OCI-LY7 (cell line): ENCODE measurements at regions of chr1 and their contacts with region 1.

Region 1: GRCh38 chr1:175319418-175320230 is 127.0 kb upstream of the KIAA0040 start:
- DNase-seq: peak; percentile 86
- H3K4me3 ChIP-seq: no peak overlapping the region
- H3K27ac ChIP-seq: no peak overlapping the region
- H3K4me1 ChIP-seq: peaks cover 37% of the 10 kb centered on the region
- CTCF ChIP-seq: peak; percentile 99

Region 2: GRCh38 chr1:175033953-175034352 is 285.7 kb before region 1 on chr1:
- CTCF ChIA-PET with region 1: no interaction called
- POLR2A ChIA-PET with region 1: no interaction called
- intact Hi-C with region 1: loop called (anchors 1 kb)
- DNase-seq: no peak
- H3K4me3 ChIP-seq: no peak overlapping the region
- H3K27ac ChIP-seq: no peak overlapping the region
- H3K4me1 ChIP-seq: peaks cover 7% of the 10 kb centered on the region
- CTCF ChIP-seq: no peak

Region 3: GRCh38 chr1:175208773-175209492 is 110.7 kb before region 1 on chr1:
- CTCF ChIA-PET with region 1: interaction called, 3 read pairs
- POLR2A ChIA-PET with region 1: no interaction called
- intact Hi-C with region 1: loop called (anchors 1 kb)
- DNase-seq: peak; percentile 91
- H3K4me3 ChIP-seq: peak overlapping the region; percentile 50
- H3K27ac ChIP-seq: peak overlapping the region; percentile 97
- H3K4me1 ChIP-seq: peaks cover 69% of the 10 kb centered on the region
- CTCF ChIP-seq: peak; percentile 49

Region 4: GRCh38 chr1:175225805-175226129 is 93.9 kb before region 1 on chr1:
- CTCF ChIA-PET with region 1: interaction called, 3 read pairs
- POLR2A ChIA-PET with region 1: interaction called, 3 read pairs
- intact Hi-C with region 1: loop called (anchors 1 kb)
- DNase-seq: no peak
- H3K4me3 ChIP-seq: peak overlapping the region; percentile 59
- H3K27ac ChIP-seq: peak overlapping the region; percentile 95
- H3K4me1 ChIP-seq: peaks cover 96% of the 10 kb centered on the region
- CTCF ChIP-seq: peak; percentile 79

Region 5: DNA sequence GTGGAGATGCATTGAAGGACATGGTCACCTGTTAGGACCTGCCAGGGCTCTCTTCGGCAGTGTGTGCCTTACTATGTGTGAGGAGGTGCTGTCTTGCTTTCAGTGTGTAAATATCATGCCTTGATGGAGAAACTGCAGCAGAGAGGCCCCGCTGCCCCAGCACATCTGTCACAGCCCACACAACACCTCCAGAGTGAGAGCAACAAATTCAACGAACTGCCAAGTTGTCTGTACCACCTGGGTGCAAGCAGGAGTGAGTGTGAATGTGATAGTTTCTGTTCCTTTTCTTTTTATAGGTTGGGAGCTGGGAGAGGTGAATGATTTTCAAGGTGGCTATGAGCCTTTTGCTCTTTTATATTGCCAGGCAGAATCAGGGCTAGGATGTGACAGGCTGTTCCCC is 12.5 kb before region 1 on chr1:
- CTCF ChIA-PET with region 1: no interaction called
- POLR2A ChIA-PET with region 1: interaction called, 17 read pairs
- intact Hi-C with region 1: no loop called
- DNase-seq: peak; percentile 89
- H3K4me3 ChIP-seq: peak overlapping the region; percentile 30
- H3K27ac ChIP-seq: peak overlapping the region; percentile 85
- H3K4me1 ChIP-seq: peaks cover 56% of the 10 kb centered on the region
- CTCF ChIP-seq: no peak

Region 6: DNA sequence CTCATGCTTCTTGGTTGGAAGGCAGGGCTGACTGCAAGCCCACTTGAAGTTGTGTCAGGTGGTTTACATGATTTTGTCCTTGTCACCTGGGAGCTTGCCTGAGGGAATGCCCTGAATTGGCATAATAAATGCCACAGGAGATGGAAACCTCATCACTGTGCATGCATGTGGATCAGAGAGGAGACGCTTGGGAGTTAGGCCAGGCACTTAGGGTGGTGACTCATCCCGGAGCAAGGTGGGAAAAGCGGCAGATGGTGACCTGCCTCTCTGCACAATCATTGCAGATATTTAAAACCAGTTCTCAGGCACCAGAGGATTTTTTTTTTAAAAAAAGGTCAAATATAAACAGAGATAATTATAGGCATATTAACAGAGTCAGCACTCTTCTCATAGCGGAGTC is 75.1 kb after region 1 on chr1:
- CTCF ChIA-PET with region 1: no interaction called
- POLR2A ChIA-PET with region 1: no interaction called
- intact Hi-C with region 1: no loop called
- DNase-seq: no peak
- H3K4me3 ChIP-seq: no peak overlapping the region
- H3K27ac ChIP-seq: no peak overlapping the region
- H3K4me1 ChIP-seq: no peaks in the 10 kb centered on the region
- CTCF ChIP-seq: no peak